HepG2 (cell line): ENCODE measurements at regions of chr21 and their contacts with region 1.

Region 1: DNA sequence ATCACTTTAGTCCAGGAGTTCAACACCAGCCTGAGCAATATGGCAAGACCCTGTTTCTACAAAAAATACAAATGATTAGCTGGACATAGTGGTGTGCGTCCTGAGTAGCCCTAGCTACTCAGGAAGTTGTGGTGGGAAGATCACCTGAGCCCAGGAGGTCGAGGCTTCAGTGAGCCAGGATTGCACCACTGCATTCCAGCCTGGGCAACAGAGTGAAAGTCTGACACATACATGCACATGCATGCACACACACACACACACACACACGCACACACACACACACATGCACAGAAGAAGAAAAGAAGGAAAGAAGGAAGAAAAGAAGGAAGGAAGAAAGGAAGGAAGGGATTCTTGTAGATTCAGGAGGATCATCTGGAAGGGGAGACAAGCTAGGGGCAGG is 104.4 kb upstream of the USP25 start:
- DNase-seq: no peak
- ATAC-seq: no peak
- H3K4me3 ChIP-seq: no peak overlapping the region
- H3K27ac ChIP-seq: no peak overlapping the region
- H3K4me1 ChIP-seq: no peaks in the 10 kb centered on the region
- H3K27me3 ChIP-seq: no peaks in the 10 kb centered on the region
- CTCF ChIP-seq: no peak
- EP300 ChIP-seq: no peak
- POLR2A ChIP-seq: no peak
- RAD21 ChIP-seq: no peak

Region 2: GRCh38 chr21:16159213-16159970 is 534.0 kb after region 1 on chr21:
- CTCF ChIA-PET with region 1: no interaction called
- POLR2A ChIA-PET with region 1: no interaction called
- in situ Hi-C with region 1: no loop called
- intact Hi-C with region 1: loop called (anchors 10 kb)
- DNase-seq: no peak
- ATAC-seq: no peak
- H3K4me3 ChIP-seq: no peak overlapping the region
- H3K27ac ChIP-seq: no peak overlapping the region
- H3K4me1 ChIP-seq: no peaks in the 10 kb centered on the region
- H3K27me3 ChIP-seq: no peaks in the 10 kb centered on the region
- CTCF ChIP-seq: no peak
- EP300 ChIP-seq: no peak
- POLR2A ChIP-seq: no peak
- RAD21 ChIP-seq: no peak